ENCODE measurements at regions of chr6 and their contacts with region 1.

Region 1: DNA sequence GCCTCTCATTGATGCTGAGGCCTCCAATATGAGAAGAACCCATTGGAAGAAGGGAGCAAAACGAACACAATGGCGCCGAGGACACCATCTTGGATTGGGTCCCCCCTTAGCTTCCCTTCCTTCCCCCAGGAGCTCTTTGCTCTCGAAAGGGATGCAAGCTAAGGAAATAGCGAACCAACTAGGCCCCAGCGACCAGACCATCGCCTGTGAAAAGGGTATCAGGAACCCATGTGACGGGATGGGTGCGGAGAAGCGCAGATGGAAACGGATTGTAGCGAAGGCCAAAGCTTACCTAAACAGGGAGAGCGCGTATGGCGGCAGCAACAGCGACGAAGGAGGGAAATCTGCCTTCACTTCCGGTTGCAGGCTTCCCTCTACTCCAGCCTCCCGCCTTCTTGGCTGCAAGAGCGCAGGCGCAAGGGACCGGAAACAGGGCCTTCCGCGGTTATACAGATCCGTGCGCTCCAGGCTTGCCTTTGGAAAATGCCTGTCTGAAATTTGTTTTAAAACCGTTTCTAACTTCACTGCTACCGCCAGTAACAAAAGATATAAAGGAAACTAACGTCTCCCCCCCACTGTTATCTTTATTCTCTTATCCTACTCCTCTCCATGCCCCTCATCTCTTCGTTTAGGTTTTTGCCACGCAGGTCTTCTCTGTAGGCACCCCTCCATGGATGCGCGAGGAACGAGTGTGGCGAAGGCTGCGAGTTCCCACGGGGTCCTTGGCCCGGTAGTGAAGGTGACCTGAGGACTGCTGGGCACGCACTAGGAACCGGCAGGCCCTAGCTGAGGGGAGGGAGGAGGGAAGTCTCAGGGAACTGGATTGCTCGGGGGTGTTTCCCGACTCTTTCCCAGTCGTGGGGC is at the start of gene DDX39B:
- DNase-seq: peak; percentile 97
- H3K4me3 Mint-ChIP-seq: peak within 1 kb of the TSS; percentile 71
- H3K27ac Mint-ChIP-seq: peak within 1 kb of the TSS; percentile 96
- H3K4me1 Mint-ChIP-seq: peaks cover 40% of the 10 kb centered on the region
- H3K27me3 Mint-ChIP-seq: no peaks in the 10 kb centered on the region
- CTCF ChIP-seq: no peak
- total RNA-seq, gene DDX39B: 551 and 565 TPM in 2 replicates

Region 2: DNA sequence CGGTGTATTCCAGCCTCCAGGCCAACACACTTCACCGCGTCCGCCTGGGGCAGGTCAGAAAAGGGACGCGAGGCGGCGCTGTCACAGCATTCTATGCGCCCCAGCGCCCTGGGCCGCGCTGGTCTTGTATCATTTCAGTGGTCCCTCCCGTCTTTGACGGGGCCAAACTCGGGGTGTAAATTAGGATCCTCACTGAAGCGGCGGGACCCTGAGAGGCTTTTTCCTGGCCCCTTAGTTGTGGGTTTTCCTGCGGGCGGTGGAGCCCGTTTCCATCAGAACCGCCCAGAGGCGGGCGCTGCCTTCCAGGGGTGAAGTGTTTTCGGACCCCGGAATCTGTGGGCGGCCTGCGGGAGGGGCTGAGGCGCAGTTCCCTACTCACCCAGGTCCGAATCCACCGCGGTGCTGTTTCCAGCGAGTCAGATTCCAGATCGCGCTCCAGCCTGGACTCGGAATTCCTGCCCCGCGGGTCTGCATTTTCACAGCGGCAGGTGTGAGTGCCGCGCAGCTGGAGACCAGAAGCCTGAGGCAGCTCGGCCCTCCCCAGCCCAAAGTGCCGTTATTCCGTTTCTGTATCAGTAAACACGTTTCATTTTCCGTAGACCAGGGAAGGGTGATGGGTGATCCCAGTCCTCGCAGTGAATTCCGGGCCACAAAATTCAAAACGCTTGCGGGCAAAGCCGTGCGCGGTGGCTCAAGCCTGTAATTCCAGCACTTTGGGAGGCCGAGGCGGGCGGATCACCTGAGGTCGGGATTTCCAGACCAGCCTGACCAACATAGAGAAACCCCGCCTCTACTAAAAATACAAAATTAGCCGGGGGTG is 47.8 kb before region 1 on chr6:
- CTCF ChIA-PET with region 1: interaction called, 17 read pairs
- POLR2A ChIA-PET with region 1: interaction called, 173 read pairs
- intact Hi-C with region 1: loop called (anchors 1 kb)
- DNase-seq: peak; percentile 86
- H3K4me3 Mint-ChIP-seq: peak overlapping the region; percentile 64
- H3K27ac Mint-ChIP-seq: peak overlapping the region; percentile 37
- H3K4me1 Mint-ChIP-seq: peaks cover 36% of the 10 kb centered on the region
- H3K27me3 Mint-ChIP-seq: no peaks in the 10 kb centered on the region
- CTCF ChIP-seq: peak; percentile 81

Region 3: GRCh38 chr6:31525932-31526591 is 15.8 kb before region 1 on chr6:
- CTCF ChIA-PET with region 1: interaction called, 3 read pairs
- POLR2A ChIA-PET with region 1: interaction called, 21 read pairs
- intact Hi-C with region 1: no loop called
- DNase-seq: no peak
- H3K4me3 Mint-ChIP-seq: no peak overlapping the region
- H3K27ac Mint-ChIP-seq: no peak overlapping the region
- H3K4me1 Mint-ChIP-seq: no peaks in the 10 kb centered on the region
- H3K27me3 Mint-ChIP-seq: peaks cover 8% of the 10 kb centered on the region
- CTCF ChIP-seq: no peak

Region 4: DNA sequence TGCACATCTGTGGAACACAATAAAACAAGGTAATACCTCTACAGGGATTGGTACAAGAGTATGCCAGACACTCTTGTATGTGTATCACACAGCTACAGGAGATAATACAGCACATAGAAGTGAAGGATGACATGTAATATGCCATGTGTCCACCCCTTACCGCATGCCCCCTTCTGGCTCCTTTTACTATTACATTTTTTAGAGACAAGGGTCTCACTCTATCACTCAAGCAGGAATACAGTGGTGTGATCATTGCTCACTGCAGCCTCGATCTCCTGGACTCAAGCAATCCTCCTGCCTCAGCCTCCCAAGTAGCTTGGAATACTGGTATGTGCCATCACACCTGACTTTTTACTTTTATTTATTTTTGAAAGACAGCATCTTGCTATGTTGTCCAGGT is 55.1 kb after region 1 on chr6:
- CTCF ChIA-PET with region 1: interaction called, 160 read pairs
- POLR2A ChIA-PET with region 1: interaction called, 18 read pairs
- intact Hi-C with region 1: loop called (anchors 1 kb)
- DNase-seq: peak; percentile 56
- H3K4me3 Mint-ChIP-seq: no peak overlapping the region
- H3K27ac Mint-ChIP-seq: no peak overlapping the region
- H3K4me1 Mint-ChIP-seq: peaks cover 6% of the 10 kb centered on the region
- H3K27me3 Mint-ChIP-seq: no peaks in the 10 kb centered on the region
- CTCF ChIP-seq: peak; percentile 28

Region 5: GRCh38 chr6:31660381-31661261 is 118.7 kb after region 1 on chr6 and contains the start of gene C6orf47:
- CTCF ChIA-PET with region 1: interaction called, 4 read pairs
- POLR2A ChIA-PET with region 1: interaction called, 21 read pairs
- intact Hi-C with region 1: no loop called
- DNase-seq: peak; percentile 74
- H3K4me3 Mint-ChIP-seq: peak within 1 kb of the TSS; percentile 89
- H3K27ac Mint-ChIP-seq: peak within 1 kb of the TSS; percentile 64
- H3K4me1 Mint-ChIP-seq: peaks cover 52% of the 10 kb centered on the region
- H3K27me3 Mint-ChIP-seq: no peaks in the 10 kb centered on the region
- CTCF ChIP-seq: no peak
- total RNA-seq, gene C6orf47: 15.5 and 16.6 TPM in 2 replicates

Region 6: GRCh38 chr6:31776989-31777666 is 235.2 kb after region 1 on chr6 and contains the start of gene VWA7:
- CTCF ChIA-PET with region 1: no interaction called
- POLR2A ChIA-PET with region 1: no interaction called
- intact Hi-C with region 1: loop called (anchors 10 kb)
- DNase-seq: peak; percentile 95
- H3K4me3 Mint-ChIP-seq: peak within 1 kb of the TSS; percentile 26
- H3K27ac Mint-ChIP-seq: no peak within 1 kb of the TSS
- H3K4me1 Mint-ChIP-seq: peaks cover 26% of the 10 kb centered on the region
- H3K27me3 Mint-ChIP-seq: no peaks in the 10 kb centered on the region
- CTCF ChIP-seq: no peak
- total RNA-seq, gene VWA7: 2.0 and 3.1 TPM in 2 replicates